ENCODE measurements at regions of chr10 and their contacts with region 1.

Region 1: DNA sequence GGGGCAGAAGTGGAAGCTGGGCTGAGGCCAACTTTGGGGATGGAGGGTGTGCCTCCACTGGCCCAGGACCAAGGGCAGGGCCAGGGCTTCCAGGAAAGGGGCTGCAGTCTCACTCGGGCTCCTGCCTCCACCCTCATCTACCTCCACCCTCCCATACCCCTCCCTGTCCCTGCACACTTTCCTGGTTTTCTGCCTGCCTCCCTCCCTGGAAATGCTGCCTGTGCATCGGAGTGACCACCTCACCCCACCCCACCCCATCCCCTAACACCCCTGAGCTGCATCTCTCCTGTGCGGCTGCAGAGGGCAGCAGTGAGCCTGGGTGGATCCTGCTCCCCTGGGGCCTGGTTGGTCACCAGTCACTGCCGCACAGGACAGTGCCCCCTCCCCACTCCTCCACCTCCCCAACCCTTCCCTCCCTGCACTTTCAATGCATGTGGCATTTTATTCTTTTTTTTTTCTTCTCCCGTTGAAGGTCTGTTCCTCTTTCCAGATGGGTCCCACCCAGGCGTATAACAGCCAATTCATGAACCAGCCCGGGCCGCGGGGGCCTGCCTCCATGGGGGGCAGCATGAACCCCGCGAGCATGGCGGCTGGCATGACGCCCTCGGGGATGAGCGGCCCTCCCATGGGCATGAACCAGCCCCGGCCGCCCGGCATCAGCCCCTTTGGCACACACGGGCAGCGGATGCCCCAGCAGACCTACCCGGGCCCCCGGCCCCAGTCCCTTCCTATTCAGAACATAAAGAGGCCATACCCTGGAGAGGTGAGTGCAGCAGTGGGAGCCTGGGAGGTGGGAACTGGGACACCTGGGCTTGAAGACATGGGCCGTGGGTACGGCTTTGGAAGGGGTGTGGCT is 54.1 kb upstream of the PPIF start:
- DNase-seq: peak; percentile 82 to 84 (median 84)
- H3K4me3 ChIP-seq: no peak overlapping the region
- H3K4me3 Mint-ChIP-seq: peak overlapping the region; percentile 30 to 55
- H3K27ac ChIP-seq: peak overlapping the region; percentile 98 to 99
- H3K27ac Mint-ChIP-seq: peak overlapping the region; percentile 97 to 100 (median 100)
- H3K4me1 ChIP-seq: peaks cover 56 to 66% of the 10 kb centered on the region in 2 donors
- H3K4me1 Mint-ChIP-seq: peaks cover 69% of the 10 kb centered on the region
- H3K27me3 ChIP-seq: no peaks in the 10 kb centered on the region
- H3K27me3 Mint-ChIP-seq: peaks cover 0 to 1% (median 0%) of the 10 kb centered on the region in 3 donors
- CTCF ChIP-seq: peak; percentile 80

Region 2: GRCh38 chr10:79256264-79256806 is 36.8 kb before region 1 on chr10:
- intact Hi-C with region 1: no loop called
- DNase-seq: no peak
- H3K4me3 ChIP-seq: no peak overlapping the region
- H3K4me3 Mint-ChIP-seq: no peak overlapping the region
- H3K27ac ChIP-seq: no peak overlapping the region
- H3K27ac Mint-ChIP-seq: peak overlapping the region in 1 of 7 donors; percentile 30
- H3K4me1 ChIP-seq: peaks cover 12 to 15% of the 10 kb centered on the region in 2 donors
- H3K4me1 Mint-ChIP-seq: peaks cover 34% of the 10 kb centered on the region
- H3K27me3 ChIP-seq: no peaks in the 10 kb centered on the region
- H3K27me3 Mint-ChIP-seq: peaks cover 0 to 1% (median 0%) of the 10 kb centered on the region in 3 donors
- CTCF ChIP-seq: no peak

Region 3: DNA sequence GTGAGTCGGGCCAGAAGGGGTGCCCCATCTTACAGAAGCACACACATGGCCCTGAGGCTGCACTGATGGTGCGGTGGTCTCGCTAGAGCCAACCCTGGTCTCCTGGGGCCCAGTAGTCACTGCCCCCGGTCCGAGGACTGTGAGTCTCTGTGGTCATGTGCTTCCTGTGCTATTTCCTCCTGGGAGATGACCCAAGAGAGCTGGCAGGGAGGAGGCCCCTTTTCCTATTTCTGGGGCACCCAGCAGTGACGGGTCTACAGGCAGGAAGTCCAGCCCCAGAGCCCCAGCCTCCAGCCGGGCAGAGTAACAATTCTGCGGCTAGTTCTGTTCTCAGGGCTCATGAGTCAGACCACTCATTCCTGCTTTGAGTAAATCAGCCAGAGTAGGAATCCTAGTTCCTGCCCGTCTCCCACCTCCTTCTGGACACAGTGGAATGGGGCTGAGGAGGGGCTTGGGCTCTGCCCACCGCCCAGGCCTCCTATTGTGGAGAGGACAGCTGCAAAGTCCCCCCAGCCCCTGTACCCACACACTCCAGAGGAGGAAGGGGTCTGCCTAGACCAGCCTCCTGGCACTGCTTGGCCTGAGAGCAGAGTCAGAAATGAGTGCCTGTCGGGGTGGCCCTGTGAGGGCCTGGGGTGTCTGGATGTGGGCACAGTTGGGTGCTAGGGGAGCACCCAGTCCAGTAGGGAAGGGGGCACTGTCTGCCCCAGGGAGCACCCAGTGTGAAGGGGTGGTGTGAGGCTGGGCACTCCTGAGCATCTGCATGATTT is 26.4 kb before region 1 on chr10:
- intact Hi-C with region 1: loop called in 1 of 2 experiments (anchors 2 kb)
- DNase-seq: peak; percentile 96 to 98 (median 98)
- H3K4me3 ChIP-seq: peak overlapping the region in 1 of 3 experiments; percentile 42
- H3K4me3 Mint-ChIP-seq: peak overlapping the region; percentile 43 to 74
- H3K27ac ChIP-seq: peak overlapping the region; percentile 98 to 100
- H3K27ac Mint-ChIP-seq: peak overlapping the region; percentile 99 to 100 (median 99)
- H3K4me1 ChIP-seq: peaks cover 79 to 86% of the 10 kb centered on the region in 2 donors
- H3K4me1 Mint-ChIP-seq: peaks cover 95% of the 10 kb centered on the region
- H3K27me3 ChIP-seq: no peaks in the 10 kb centered on the region
- H3K27me3 Mint-ChIP-seq: peaks cover 0 to 3% (median 0%) of the 10 kb centered on the region in 3 donors
- CTCF ChIP-seq: no peak

Region 4: DNA sequence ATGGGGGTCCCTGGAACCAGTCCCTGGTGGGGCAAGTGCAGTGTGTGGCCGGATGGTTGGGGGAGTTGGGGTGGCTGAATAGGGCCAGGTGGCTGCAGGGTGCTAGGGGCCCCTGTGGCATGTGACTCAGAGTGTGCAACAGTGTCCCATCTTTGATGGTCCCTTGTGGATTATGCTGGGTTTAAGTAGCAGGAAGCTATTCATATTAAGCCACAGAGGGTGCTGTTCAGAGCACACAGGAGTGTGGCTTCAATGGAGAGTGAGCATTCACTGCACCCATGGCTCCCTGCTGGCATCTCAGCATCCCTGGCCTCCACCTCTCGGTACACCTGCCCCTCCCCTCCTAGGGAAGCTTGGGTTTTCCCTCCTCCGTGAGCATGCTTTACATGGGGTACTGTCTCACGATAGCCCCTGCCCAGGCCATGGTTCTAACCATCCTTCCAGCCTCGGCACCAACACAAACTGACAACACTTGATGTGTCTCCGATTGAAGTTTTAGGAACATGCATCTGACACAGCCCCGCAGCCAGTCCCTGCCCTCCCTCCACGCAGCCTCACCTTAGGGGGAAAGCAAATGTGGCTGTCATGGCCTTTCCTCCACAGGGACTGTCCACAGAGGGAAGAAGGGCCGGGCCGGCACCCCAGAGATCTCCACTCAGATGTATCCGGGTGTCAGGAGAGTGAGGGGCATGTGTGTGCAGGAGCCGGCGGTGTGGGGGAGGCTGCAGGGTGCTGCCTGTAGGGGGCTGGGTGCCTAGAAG is 23.7 kb after region 1 on chr10:
- intact Hi-C with region 1: loop called (anchors 1 to 2 kb)
- DNase-seq: peak in 2 of 3 donors; percentile 44 to 54
- H3K4me3 ChIP-seq: no peak overlapping the region
- H3K4me3 Mint-ChIP-seq: peak overlapping the region; percentile 6 to 60
- H3K27ac ChIP-seq: no peak overlapping the region
- H3K27ac Mint-ChIP-seq: peak overlapping the region in 6 of 7 donors; percentile 82 to 99 (median 98)
- H3K4me1 ChIP-seq: peaks cover 54 to 57% of the 10 kb centered on the region in 2 donors
- H3K4me1 Mint-ChIP-seq: peaks cover 55% of the 10 kb centered on the region
- H3K27me3 ChIP-seq: peaks cover 0 to 5% of the 10 kb centered on the region in 2 donors
- H3K27me3 Mint-ChIP-seq: peaks cover 7 to 26% (median 19%) of the 10 kb centered on the region in 3 donors
- CTCF ChIP-seq: no peak

Region 5: GRCh38 chr10:79347226-79347893 is 54.2 kb after region 1 on chr10 and contains the start of gene PPIF:
- intact Hi-C with region 1: loop called (anchors 2 to 5 kb)
- DNase-seq: peak; percentile 91 to 94 (median 93)
- H3K4me3 ChIP-seq: peak within 1 kb of the TSS; percentile 59 to 88 (median 83)
- H3K4me3 Mint-ChIP-seq: peak within 1 kb of the TSS; percentile 91 to 92
- H3K27ac ChIP-seq: peak within 1 kb of the TSS; percentile 96 to 99
- H3K27ac Mint-ChIP-seq: peak within 1 kb of the TSS; percentile 96 to 98 (median 97)
- H3K4me1 ChIP-seq: peaks cover 72 to 83% of the 10 kb centered on the region in 2 donors
- H3K4me1 Mint-ChIP-seq: peaks cover 66% of the 10 kb centered on the region
- H3K27me3 ChIP-seq: no peaks in the 10 kb centered on the region
- H3K27me3 Mint-ChIP-seq: peaks cover 1 to 4% (median 4%) of the 10 kb centered on the region in 3 donors
- CTCF ChIP-seq: peak; percentile 99
- polyA plus RNA-seq, gene PPIF: 36.6 to 1,064 (median 52.3) TPM

Region 6: DNA sequence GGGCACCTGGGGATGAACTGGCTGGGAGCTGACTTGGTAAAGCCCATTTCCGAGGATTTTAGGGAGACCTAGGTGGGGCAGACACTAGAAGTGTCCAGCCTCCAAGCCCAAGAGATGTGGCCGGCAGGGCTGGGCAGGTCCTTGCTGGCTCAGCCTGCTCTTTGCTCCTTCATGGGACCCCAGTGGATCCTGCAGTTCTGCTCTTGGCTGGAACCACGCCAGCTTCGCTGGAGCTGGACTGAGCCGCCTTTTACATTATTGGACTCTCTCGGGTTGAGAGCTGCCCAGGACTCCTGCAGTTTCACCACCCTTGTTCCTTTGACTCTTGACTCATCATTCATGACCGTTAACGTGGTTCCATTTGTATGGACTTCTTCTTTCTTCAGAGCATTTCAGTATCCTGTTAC is 59.9 kb after region 1 on chr10:
- intact Hi-C with region 1: loop called (anchors 2 to 5 kb)
- DNase-seq: peak; percentile 82 to 88 (median 84)
- H3K4me3 ChIP-seq: peak overlapping the region in 1 of 3 experiments; percentile 37
- H3K4me3 Mint-ChIP-seq: no peak overlapping the region
- H3K27ac ChIP-seq: peak overlapping the region; percentile 74 to 80
- H3K27ac Mint-ChIP-seq: peak overlapping the region; percentile 84 to 94 (median 92)
- H3K4me1 ChIP-seq: peaks cover 83 to 88% of the 10 kb centered on the region in 2 donors
- H3K4me1 Mint-ChIP-seq: peaks cover 81% of the 10 kb centered on the region
- H3K27me3 ChIP-seq: no peaks in the 10 kb centered on the region
- H3K27me3 Mint-ChIP-seq: peaks cover 0 to 3% (median 2%) of the 10 kb centered on the region in 3 donors
- CTCF ChIP-seq: no peak

Region 7: GRCh38 chr10:79502561-79503309 is 209.6 kb after region 1 on chr10:
- intact Hi-C with region 1: no loop called
- DNase-seq: no peak
- H3K4me3 ChIP-seq: no peak overlapping the region
- H3K4me3 Mint-ChIP-seq: peak overlapping the region in 1 of 2 donors; percentile 9
- H3K27ac ChIP-seq: no peak overlapping the region
- H3K27ac Mint-ChIP-seq: peak overlapping the region in 1 of 7 donors; percentile 62
- H3K4me1 ChIP-seq: no peaks in the 10 kb centered on the region
- H3K4me1 Mint-ChIP-seq: no peaks in the 10 kb centered on the region
- H3K27me3 ChIP-seq: no peaks in the 10 kb centered on the region
- H3K27me3 Mint-ChIP-seq: peaks cover 19 to 37% (median 24%) of the 10 kb centered on the region in 3 donors
- CTCF ChIP-seq: peak; percentile 21